CD8-positive, alpha-beta T cell (primary cell): ENCODE measurements at regions of chr2 and their contacts with region 1.

Region 1: GRCh38 chr2:197198890-197199289 is 111.7 kb downstream of the ANKRD44 start:
- DNase-seq: peak; percentile 76 to 98 (median 87)
- ATAC-seq: peak; percentile 80
- H3K4me3 ChIP-seq: peak overlapping the region in 1 of 2 experiments; percentile 41
- H3K4me3 Mint-ChIP-seq: peak overlapping the region; percentile 94
- H3K27ac ChIP-seq: peak overlapping the region; percentile 66 to 86
- H3K27ac Mint-ChIP-seq: peak overlapping the region; percentile 99
- H3K4me1 ChIP-seq: peaks cover 81% of the 10 kb centered on the region
- H3K4me1 Mint-ChIP-seq: peaks cover 90% of the 10 kb centered on the region
- H3K27me3 ChIP-seq: no peaks in the 10 kb centered on the region
- H3K27me3 Mint-ChIP-seq: no peaks in the 10 kb centered on the region
- CTCF ChIP-seq: no peak

Region 2: DNA sequence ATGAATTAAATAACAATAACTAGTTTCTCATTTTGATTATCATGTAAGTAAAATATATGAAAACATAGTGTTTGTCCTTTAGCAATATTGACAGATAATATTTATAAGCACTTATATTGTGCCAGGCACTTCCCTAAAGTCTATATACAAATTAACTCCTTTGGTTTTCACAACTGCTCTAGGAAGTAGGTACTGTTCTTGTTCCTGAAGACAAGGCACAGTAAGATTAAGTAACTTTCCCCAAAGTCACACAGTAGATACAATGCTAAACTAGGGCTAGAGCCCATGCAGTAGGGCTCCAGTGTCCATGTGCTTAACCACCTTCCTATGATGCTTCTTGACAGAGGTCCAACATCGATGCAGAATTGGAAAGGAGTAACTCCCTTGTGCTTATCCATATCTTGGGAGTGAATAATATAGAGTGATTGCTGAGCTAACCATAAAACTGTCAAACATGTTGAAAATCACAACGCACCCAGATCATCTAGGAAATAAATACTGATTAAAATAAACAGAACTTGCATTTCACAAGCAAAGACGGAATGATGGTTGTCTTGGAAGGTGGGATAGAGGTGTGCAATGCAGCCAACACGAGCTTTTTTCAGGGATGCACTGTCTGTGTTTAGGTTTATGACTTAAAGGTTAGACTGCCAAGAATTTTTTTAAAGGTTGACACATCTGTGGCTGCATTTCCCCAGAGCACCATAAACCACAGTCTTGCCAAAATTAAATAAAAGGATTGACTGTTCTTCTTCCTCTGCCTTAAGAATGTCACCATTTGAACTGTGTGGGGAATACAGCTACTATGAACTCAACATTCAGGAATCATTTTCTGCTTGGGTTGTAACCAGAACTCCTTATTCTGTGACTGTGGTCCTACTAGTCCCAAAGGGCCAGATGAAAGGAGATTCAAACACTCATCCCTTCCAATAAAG is 30.9 kb after region 1 on chr2:
- CTCF ChIA-PET with region 1: interaction called, 4 read pairs
- POLR2A ChIA-PET with region 1: interaction called, 10 read pairs
- intact Hi-C with region 1: no loop called
- DNase-seq: no peak
- ATAC-seq: no peak
- H3K4me3 ChIP-seq: no peak overlapping the region
- H3K4me3 Mint-ChIP-seq: peak overlapping the region; percentile 4
- H3K27ac ChIP-seq: peak overlapping the region in 1 of 2 experiments; percentile 22
- H3K27ac Mint-ChIP-seq: peak overlapping the region; percentile 89
- H3K4me1 ChIP-seq: peaks cover 88% of the 10 kb centered on the region
- H3K4me1 Mint-ChIP-seq: peaks cover 95% of the 10 kb centered on the region
- H3K27me3 ChIP-seq: no peaks in the 10 kb centered on the region
- H3K27me3 Mint-ChIP-seq: no peaks in the 10 kb centered on the region
- CTCF ChIP-seq: no peak

Region 3: GRCh38 chr2:197248623-197249022 is 49.7 kb after region 1 on chr2:
- CTCF ChIA-PET with region 1: interaction called, 5 read pairs
- POLR2A ChIA-PET with region 1: interaction called, 10 read pairs
- intact Hi-C with region 1: no loop called
- DNase-seq: peak in 4 of 9 experiments; percentile 31 to 70 (median 57)
- ATAC-seq: peak; percentile 74
- H3K4me3 ChIP-seq: no peak overlapping the region
- H3K4me3 Mint-ChIP-seq: peak overlapping the region; percentile 65
- H3K27ac ChIP-seq: peak overlapping the region in 1 of 2 experiments; percentile 50
- H3K27ac Mint-ChIP-seq: peak overlapping the region; percentile 89
- H3K4me1 ChIP-seq: peaks cover 83% of the 10 kb centered on the region
- H3K4me1 Mint-ChIP-seq: peaks cover 89% of the 10 kb centered on the region
- H3K27me3 ChIP-seq: no peaks in the 10 kb centered on the region
- H3K27me3 Mint-ChIP-seq: no peaks in the 10 kb centered on the region
- CTCF ChIP-seq: no peak

Region 4: GRCh38 chr2:197293252-197294007 is 94.5 kb after region 1 on chr2:
- CTCF ChIA-PET with region 1: interaction called, 8 read pairs
- POLR2A ChIA-PET with region 1: interaction called, 18 read pairs
- intact Hi-C with region 1: no loop called
- DNase-seq: peak in 5 of 9 experiments; percentile 37 to 73 (median 51)
- ATAC-seq: peak; percentile 70
- H3K4me3 ChIP-seq: peak overlapping the region; percentile 11 to 18
- H3K4me3 Mint-ChIP-seq: peak overlapping the region; percentile 73
- H3K27ac ChIP-seq: peak overlapping the region; percentile 41 to 88
- H3K27ac Mint-ChIP-seq: peak overlapping the region; percentile 94
- H3K4me1 ChIP-seq: peaks cover 97% of the 10 kb centered on the region
- H3K4me1 Mint-ChIP-seq: peaks cover 86% of the 10 kb centered on the region
- H3K27me3 ChIP-seq: no peaks in the 10 kb centered on the region
- H3K27me3 Mint-ChIP-seq: no peaks in the 10 kb centered on the region
- CTCF ChIP-seq: no peak

Region 5: DNA sequence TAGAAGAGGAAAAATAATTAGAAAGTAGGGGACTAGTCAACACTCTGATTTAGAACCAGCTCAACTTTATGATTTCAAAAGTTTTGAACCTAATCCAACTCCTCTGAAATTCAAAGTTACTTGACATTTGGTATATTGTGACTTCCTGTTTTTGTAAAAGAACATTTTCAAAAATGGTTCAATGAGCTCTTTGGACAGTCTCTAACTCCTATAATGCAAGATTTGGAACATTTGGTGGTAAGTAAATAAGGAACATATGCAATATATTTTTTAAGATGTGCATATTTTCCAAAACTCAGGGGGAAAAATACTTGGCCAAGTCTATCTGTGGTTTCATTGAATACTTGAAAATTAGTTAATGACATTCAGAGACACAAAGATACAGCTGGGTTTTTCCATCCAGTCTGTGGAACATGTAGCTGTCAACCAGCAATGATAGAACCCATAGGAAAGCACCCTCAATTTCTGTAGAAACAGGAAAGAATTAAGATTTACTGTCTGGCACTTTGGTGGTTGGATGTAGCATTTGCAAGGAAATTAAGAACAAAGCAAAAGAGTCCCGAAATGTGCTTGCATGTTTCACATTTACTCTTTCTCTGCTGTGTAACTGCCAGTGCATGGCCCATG is 128.7 kb after region 1 on chr2:
- CTCF ChIA-PET with region 1: interaction called, 3 read pairs
- POLR2A ChIA-PET with region 1: interaction called, 10 read pairs
- intact Hi-C with region 1: no loop called
- DNase-seq: peak in 2 of 9 experiments; percentile 40 to 59
- ATAC-seq: no peak
- H3K4me3 ChIP-seq: no peak overlapping the region
- H3K4me3 Mint-ChIP-seq: peak overlapping the region; percentile 66
- H3K27ac ChIP-seq: peak overlapping the region; percentile 3 to 33
- H3K27ac Mint-ChIP-seq: peak overlapping the region; percentile 81
- H3K4me1 ChIP-seq: peaks cover 67% of the 10 kb centered on the region
- H3K4me1 Mint-ChIP-seq: peaks cover 59% of the 10 kb centered on the region
- H3K27me3 ChIP-seq: no peaks in the 10 kb centered on the region
- H3K27me3 Mint-ChIP-seq: no peaks in the 10 kb centered on the region
- CTCF ChIP-seq: no peak

Region 6: DNA sequence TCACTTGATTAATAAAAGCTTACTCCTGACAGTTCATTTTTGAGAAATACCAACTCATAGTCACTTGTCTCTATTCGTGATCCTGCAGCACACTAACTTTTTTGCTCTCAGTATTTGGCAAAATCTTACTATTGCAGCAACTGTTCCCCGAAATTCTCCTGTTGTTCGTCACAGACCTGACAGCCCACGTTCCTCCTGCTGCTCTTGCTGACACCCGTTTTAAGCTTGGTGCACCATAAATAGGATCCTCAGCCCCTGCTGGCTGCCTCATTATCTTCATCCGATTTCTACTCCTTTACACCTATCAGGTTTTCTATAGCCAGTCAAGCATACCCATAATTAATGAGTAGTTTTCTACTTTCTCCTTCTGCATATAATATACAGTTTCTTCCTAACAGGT is 974.4 kb after region 1 on chr2:
- CTCF ChIA-PET with region 1: no interaction called
- POLR2A ChIA-PET with region 1: no interaction called
- intact Hi-C with region 1: no loop called
- DNase-seq: no peak
- ATAC-seq: no peak
- H3K4me3 ChIP-seq: no peak overlapping the region
- H3K4me3 Mint-ChIP-seq: no peak overlapping the region
- H3K27ac ChIP-seq: no peak overlapping the region
- H3K27ac Mint-ChIP-seq: no peak overlapping the region
- H3K4me1 ChIP-seq: no peaks in the 10 kb centered on the region
- H3K4me1 Mint-ChIP-seq: no peaks in the 10 kb centered on the region
- H3K27me3 ChIP-seq: no peaks in the 10 kb centered on the region
- H3K27me3 Mint-ChIP-seq: peaks cover 3% of the 10 kb centered on the region
- CTCF ChIP-seq: no peak